Posterior vena cava (tissue), 2 donors: ENCODE measurements at regions of chr11 and their contacts with region 1.

Region 1: DNA sequence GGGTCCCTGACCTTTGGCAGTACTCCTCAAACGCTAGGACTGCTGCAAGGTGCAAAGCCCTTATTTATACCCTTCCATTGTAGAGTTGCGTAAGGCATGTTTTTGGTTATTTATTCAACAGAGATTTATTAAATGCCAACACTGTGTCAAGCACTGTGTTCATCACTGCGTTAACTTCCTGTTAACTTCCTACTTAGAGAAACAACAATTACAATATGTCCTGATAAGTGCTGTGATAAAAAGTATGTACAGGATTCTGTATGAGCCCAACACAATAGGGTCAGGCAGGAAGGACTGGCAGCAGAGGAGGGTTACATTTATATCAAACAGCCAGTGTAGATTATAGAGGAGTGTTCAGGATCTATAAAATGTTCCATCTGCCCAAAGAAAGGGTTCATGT is 812.8 kb upstream of the API5 start:
- DNase-seq: no peak

Region 2: GRCh38 chr11:42960521-42961088 is 461.6 kb after region 1 on chr11:
- intact Hi-C with region 1: loop called in 1 of 2 experiments (anchors 5 kb)
- DNase-seq: no peak